ENCODE measurements at regions of chr5 and their contacts with region 1.

Region 1: GRCh38 chr5:96934708-96935558 is 947 bp upstream of the LNPEP start:
- DNase-seq: peak; percentile 88 to 98 (median 93)
- ATAC-seq: peak; percentile 64
- H3K4me3 ChIP-seq: peak overlapping the region; percentile 88 to 96
- H3K4me3 Mint-ChIP-seq: peak overlapping the region; percentile 89
- H3K27ac ChIP-seq: peak overlapping the region; percentile 88 to 89
- H3K27ac Mint-ChIP-seq: peak overlapping the region; percentile 96
- H3K4me1 ChIP-seq: peaks cover 60% of the 10 kb centered on the region
- H3K4me1 Mint-ChIP-seq: peaks cover 69% of the 10 kb centered on the region
- H3K27me3 ChIP-seq: no peaks in the 10 kb centered on the region
- H3K27me3 Mint-ChIP-seq: no peaks in the 10 kb centered on the region
- CTCF ChIP-seq: no peak

Region 2: GRCh38 chr5:96536991-96537785 is 397.7 kb before region 1 on chr5:
- CTCF ChIA-PET with region 1: no interaction called
- POLR2A ChIA-PET with region 1: no interaction called
- intact Hi-C with region 1: loop called in 1 of 2 experiments (anchors 10 kb)
- DNase-seq: peak in 2 of 9 experiments; percentile 73 to 83
- ATAC-seq: peak; percentile 87
- H3K4me3 ChIP-seq: peak overlapping the region in 1 of 2 experiments; percentile 6
- H3K4me3 Mint-ChIP-seq: peak overlapping the region; percentile 46
- H3K27ac ChIP-seq: peak overlapping the region; percentile 10 to 55
- H3K27ac Mint-ChIP-seq: peak overlapping the region; percentile 81
- H3K4me1 ChIP-seq: peaks cover 24% of the 10 kb centered on the region
- H3K4me1 Mint-ChIP-seq: peaks cover 27% of the 10 kb centered on the region
- H3K27me3 ChIP-seq: no peaks in the 10 kb centered on the region
- H3K27me3 Mint-ChIP-seq: no peaks in the 10 kb centered on the region
- CTCF ChIP-seq: no peak

Region 3: DNA sequence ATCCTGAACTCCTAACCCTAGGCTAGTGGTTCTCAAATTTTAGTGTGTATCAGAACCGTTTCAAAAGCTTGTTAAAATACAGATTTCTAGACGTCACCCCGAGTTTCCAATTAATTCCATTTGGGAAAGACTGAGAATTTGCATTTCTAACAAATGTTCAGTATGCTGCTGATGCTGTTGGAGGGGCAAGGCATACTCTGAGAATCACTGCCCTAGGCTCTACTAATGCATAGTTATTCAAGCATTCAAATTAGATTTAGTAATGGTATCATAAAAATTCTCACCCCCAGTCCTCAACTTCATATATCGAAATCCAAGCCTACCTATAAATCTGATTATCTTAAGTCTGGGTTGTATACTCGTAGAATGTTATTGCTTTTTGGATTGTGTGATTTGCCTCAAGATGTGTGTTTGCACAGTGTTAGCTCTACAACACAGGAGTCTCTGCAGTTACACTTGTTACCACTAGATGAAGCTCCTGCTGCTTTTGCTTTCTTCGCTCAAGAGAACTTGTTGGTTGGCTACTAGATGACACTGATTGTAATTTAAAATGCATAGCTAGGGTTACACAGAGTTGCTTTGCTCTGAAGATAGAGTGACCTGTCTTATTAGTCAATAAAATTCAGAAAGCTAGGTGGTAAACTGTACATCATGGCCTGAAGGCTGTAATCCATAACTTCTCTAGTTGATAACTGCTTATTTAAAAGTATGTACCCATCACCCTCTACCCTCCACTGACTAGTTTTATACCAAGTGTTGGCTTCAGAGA is 66.1 kb before region 1 on chr5:
- CTCF ChIA-PET with region 1: interaction called, 9 read pairs
- POLR2A ChIA-PET with region 1: interaction called, 13 read pairs
- intact Hi-C with region 1: loop called in 1 of 2 experiments (anchors 1 kb)
- DNase-seq: peak in 4 of 9 experiments; percentile 24 to 79 (median 50)
- ATAC-seq: peak; percentile 99
- H3K4me3 ChIP-seq: no peak overlapping the region
- H3K4me3 Mint-ChIP-seq: no peak overlapping the region
- H3K27ac ChIP-seq: no peak overlapping the region
- H3K27ac Mint-ChIP-seq: no peak overlapping the region
- H3K4me1 ChIP-seq: peaks cover 28% of the 10 kb centered on the region
- H3K4me1 Mint-ChIP-seq: peaks cover 41% of the 10 kb centered on the region
- H3K27me3 ChIP-seq: no peaks in the 10 kb centered on the region
- H3K27me3 Mint-ChIP-seq: no peaks in the 10 kb centered on the region
- CTCF ChIP-seq: peak; percentile 96

Region 4: DNA sequence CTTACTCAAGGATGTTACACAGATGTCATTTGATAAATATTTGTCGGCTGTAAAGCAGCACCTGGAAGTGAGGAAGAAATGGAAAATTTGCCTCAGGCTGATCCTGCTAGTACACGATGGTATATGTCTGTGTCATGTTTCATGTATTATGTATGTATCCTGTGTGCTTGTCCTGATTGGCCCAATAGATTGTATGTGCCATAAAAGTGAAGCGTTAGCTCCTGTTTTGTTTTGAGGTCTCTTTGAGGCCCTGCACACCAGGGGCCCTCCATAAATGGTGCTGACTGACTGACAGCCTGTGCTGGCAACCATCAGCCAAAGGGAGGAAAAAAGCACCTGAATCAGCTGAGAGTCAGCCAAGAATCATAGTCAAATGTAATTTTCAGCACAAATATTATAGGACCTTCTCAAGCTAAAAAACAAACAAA is 10.9 kb before region 1 on chr5:
- CTCF ChIA-PET with region 1: interaction called, 8 read pairs
- POLR2A ChIA-PET with region 1: interaction called, 12 read pairs
- intact Hi-C with region 1: loop called in 1 of 2 experiments (anchors 1 kb)
- DNase-seq: peak in 7 of 9 experiments; percentile 13 to 73 (median 49)
- ATAC-seq: peak; percentile 94
- H3K4me3 ChIP-seq: no peak overlapping the region
- H3K4me3 Mint-ChIP-seq: peak overlapping the region; percentile 23
- H3K27ac ChIP-seq: peak overlapping the region in 1 of 2 experiments; percentile 51
- H3K27ac Mint-ChIP-seq: peak overlapping the region; percentile 92
- H3K4me1 ChIP-seq: peaks cover 38% of the 10 kb centered on the region
- H3K4me1 Mint-ChIP-seq: peaks cover 63% of the 10 kb centered on the region
- H3K27me3 ChIP-seq: no peaks in the 10 kb centered on the region
- H3K27me3 Mint-ChIP-seq: no peaks in the 10 kb centered on the region
- CTCF ChIP-seq: no peak

Region 5: DNA sequence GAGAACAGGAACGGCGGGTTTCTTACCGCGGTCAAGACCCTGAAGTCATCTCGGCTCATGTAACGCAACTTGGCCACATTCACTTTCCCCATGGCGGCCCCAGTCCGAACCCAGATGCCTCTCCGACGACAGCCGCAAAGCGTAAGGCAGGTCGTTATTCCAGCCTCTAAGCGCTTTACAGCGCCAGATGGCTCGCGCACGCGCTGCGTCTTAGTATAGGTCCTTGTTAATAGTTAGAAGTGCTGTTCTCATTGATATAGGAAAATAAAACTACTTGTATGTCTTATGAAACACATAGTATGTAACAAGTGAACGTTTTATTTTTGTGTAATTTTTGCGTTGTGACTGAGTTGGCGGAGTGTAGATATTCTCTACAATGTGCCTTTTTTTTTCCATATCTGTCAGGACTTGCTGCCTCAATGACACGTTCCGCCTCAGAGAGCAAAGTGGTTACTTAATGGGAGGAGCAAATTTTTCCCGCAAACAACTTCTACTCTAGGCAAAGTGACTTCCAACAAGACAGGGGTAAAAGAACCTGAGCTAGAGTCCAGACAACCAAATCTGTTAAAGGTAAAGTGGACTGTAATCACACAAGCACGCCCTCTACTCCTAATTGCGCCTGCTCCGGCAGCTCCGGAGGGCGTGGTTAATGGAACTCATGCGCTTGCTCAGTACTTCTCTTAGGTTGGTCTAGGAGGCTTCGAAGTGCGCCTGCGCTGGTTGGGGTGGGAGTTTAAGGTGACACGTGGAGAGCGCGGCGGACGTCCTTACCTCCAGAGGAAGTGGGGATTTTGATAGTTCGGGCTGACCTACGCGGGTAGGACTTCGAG is 248.4 kb after region 1 on chr5 and contains the start of gene RIOK2:
- CTCF ChIA-PET with region 1: no interaction called
- POLR2A ChIA-PET with region 1: no interaction called
- intact Hi-C with region 1: loop called in 1 of 2 experiments (anchors 1 kb)
- DNase-seq: peak; percentile 81 to 96 (median 91)
- ATAC-seq: peak; percentile 90
- H3K4me3 ChIP-seq: peak within 1 kb of the TSS; percentile 50 to 89
- H3K4me3 Mint-ChIP-seq: peak within 1 kb of the TSS; percentile 96
- H3K27ac ChIP-seq: peak within 1 kb of the TSS; percentile 89 to 98
- H3K27ac Mint-ChIP-seq: peak within 1 kb of the TSS; percentile 100
- H3K4me1 ChIP-seq: peaks cover 13% of the 10 kb centered on the region
- H3K4me1 Mint-ChIP-seq: peaks cover 38% of the 10 kb centered on the region
- H3K27me3 ChIP-seq: no peaks in the 10 kb centered on the region
- H3K27me3 Mint-ChIP-seq: no peaks in the 10 kb centered on the region
- CTCF ChIP-seq: no peak
- total RNA-seq, gene RIOK2: 29.2 to 29.6 TPM